AG04449 (cell line): ENCODE measurements at regions of chr1 and their contacts with region 1.

Region 1: DNA sequence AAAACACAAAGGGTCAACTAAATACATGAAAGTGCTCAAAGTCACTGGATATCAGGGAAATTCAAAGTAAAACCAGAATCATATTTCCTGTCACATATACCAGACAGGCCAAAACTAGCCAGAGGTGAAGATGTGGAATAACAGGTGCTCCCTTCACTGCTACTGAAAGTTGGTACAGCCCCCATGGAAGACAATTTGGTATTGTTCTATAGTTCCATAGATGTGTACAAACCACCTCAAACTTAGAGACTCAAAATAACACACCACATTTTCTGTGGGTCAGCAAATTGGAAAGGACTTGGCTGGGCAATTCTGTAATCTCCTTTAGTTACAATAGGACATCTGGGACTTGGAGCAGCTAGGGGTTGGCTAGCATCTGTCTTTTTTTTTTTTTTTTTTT is 24.5 kb upstream of the SOAT1 start:
- DNase-seq: no peak
- H3K4me3 ChIP-seq: no peak overlapping the region
- CTCF ChIP-seq: no peak

Region 2: GRCh38 chr1:179283992-179284391 is 14.9 kb after region 1 on chr1:
- CTCF ChIA-PET with region 1: interaction called, 12 read pairs
- POLR2A ChIA-PET with region 1: no interaction called
- DNase-seq: no peak
- H3K4me3 ChIP-seq: no peak overlapping the region
- CTCF ChIP-seq: no peak